Heart right ventricle (tissue), 16 donors: ENCODE measurements at regions of chr1 and their contacts with region 1.

Region 1: DNA sequence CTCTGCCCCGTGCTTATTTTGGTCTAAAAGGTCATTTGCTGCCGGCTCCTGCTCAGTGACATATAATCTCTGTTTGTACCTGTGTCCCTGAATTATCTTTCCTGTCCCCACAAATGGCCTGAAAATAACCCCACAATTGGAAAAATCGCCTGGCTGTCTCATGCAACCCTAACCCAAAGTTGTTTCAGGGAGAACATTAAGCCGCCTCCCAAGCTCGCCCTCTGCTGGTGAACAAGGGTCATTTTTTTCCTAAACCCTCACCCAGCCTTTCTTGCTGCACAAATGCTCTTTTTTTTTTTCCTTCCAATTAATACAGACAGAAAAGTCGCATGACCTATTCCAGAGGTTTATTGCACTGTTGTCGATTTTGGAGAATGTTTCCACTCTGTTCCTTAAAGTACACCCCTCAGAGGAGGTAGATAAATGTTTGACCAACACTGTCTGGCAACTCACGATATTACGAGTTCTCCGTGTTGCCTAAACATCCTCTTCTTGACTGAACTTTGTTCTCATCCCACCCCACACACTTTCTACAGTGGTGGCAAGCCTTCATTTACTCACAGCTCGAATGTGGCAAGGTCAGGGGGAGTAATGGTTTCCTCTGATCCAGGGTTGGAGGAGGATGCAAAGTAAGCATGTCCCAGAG is 148.7 kb downstream of the ZZZ3 start:
- DNase-seq: peak; percentile 34 to 62
- ATAC-seq: peak in 7 of 8 donors; percentile 38 to 74 (median 57)
- H3K4me3 ChIP-seq: no peak overlapping the region
- H3K27ac ChIP-seq: no peak overlapping the region
- H3K4me1 ChIP-seq: peaks cover 0 to 16% (median 0%) of the 10 kb centered on the region in 9 donors
- H3K27me3 ChIP-seq: no peaks in the 10 kb centered on the region
- CTCF ChIP-seq: peak; percentile 68 to 87 (median 84)

Region 2: DNA sequence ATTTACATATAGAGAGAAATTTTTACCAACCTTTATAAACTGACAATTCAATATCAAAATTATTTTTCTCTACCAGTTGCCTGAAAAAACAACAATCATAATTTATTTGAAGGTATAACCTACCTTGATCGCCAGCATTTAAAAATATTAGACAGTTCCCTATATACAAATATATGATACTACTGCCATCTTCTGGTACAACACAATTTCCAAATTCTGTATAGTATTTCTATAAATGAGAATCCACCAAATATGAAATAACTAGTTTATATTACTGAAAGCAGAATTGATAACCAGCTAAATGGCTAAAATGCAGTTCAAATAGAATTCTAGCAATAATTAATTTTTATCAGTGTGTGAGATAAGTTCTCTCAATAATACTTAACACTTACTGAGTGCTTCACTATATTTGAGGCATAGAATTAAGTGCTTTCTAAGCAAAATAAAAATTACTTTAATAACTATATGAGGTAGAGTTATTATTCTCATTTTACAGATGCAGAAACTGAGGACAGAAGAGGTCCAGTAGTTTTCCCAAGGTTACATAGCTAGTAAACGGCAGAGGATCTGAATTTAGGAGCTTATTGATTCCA is 390.2 kb before region 1 on chr1:
- intact Hi-C with region 1: loop called in 6 of 10 experiments (anchors 2 to 5 kb)
- DNase-seq: no peak
- ATAC-seq: no peak
- H3K4me3 ChIP-seq: no peak overlapping the region
- H3K27ac ChIP-seq: no peak overlapping the region
- H3K4me1 ChIP-seq: no peaks in the 10 kb centered on the region
- H3K27me3 ChIP-seq: no peaks in the 10 kb centered on the region
- CTCF ChIP-seq: peak in 7 of 9 donors; percentile 15 to 51 (median 40)

Region 3: GRCh38 chr1:77156214-77156613 is 377.6 kb before region 1 on chr1:
- intact Hi-C with region 1: loop called in 4 of 10 experiments (anchors 5 to 10 kb)
- DNase-seq: no peak
- ATAC-seq: no peak
- H3K4me3 ChIP-seq: no peak overlapping the region
- H3K27ac ChIP-seq: no peak overlapping the region
- H3K4me1 ChIP-seq: no peaks in the 10 kb centered on the region
- H3K27me3 ChIP-seq: no peaks in the 10 kb centered on the region
- CTCF ChIP-seq: no peak

Region 4: GRCh38 chr1:77219166-77219887 is 314.5 kb before region 1 on chr1 and contains the start of gene PIGK:
- intact Hi-C with region 1: no loop called
- DNase-seq: peak; percentile 86 to 88
- ATAC-seq: peak; percentile 95 to 99 (median 99)
- H3K4me3 ChIP-seq: peak within 1 kb of the TSS; percentile 50 to 83 (median 74)
- H3K27ac ChIP-seq: peak within 1 kb of the TSS in 9 of 10 donors; percentile 74 to 92 (median 85)
- H3K4me1 ChIP-seq: peaks cover 0 to 23% (median 15%) of the 10 kb centered on the region in 9 donors
- H3K27me3 ChIP-seq: no peaks in the 10 kb centered on the region
- CTCF ChIP-seq: peak in 1 of 9 donors; percentile 14
- total RNA-seq, gene PIGK: 24.4 to 40.7 (median 30.8) TPM

Region 5: DNA sequence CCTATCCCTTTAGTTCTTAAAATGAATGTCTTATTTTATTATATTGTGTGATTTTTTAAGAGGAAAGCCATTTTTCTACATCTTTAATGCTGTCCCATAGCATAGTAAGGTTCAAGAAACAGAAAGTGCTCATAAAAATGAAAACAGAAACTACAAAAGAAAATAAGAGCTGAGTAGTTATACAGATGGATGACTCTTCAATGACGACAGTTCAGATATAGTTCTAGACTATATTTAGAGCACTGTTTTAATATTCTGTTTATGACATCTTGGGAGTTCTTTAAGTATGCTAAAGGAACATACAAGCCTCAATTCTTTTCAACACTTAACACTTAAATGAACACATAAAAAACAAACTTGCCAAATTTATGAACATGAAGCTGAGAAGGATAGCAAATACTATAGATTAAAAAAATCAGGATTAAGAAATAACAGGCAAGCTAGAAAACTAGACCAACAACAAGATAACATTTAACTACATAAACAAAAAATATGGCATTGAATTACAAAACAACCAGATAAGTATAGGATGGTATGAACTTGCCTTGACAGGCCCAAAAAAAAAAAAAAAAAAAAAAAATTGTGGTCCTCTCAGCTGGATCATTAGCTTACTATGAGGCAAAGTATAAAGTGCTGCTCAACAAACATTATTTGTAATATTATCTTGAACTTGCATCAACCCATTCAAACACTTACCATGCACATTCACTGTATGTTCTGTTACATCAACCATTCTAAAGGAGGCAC is 60.8 kb after region 1 on chr1:
- intact Hi-C with region 1: no loop called
- DNase-seq: no peak
- ATAC-seq: no peak
- H3K4me3 ChIP-seq: no peak overlapping the region
- H3K27ac ChIP-seq: no peak overlapping the region
- H3K4me1 ChIP-seq: peaks cover 0 to 24% (median 0%) of the 10 kb centered on the region in 9 donors
- H3K27me3 ChIP-seq: no peaks in the 10 kb centered on the region
- CTCF ChIP-seq: no peak